ENCODE measurements at regions of chr7 and their contacts with region 1.

Region 1: GRCh38 chr7:41940760-41941343 is 238.0 kb upstream of the INHBA start:
- DNase-seq: no peak
- H3K4me3 ChIP-seq: no peak overlapping the region
- H3K27me3 ChIP-seq: no peaks in the 10 kb centered on the region
- CTCF ChIP-seq: peak; percentile 88

Region 2: GRCh38 chr7:41796331-41796730 is 144.5 kb before region 1 on chr7:
- CTCF ChIA-PET with region 1: no interaction called
- POLR2A ChIA-PET with region 1: no interaction called
- DNase-seq: no peak
- H3K4me3 ChIP-seq: no peak overlapping the region
- H3K27me3 ChIP-seq: no peaks in the 10 kb centered on the region
- CTCF ChIP-seq: no peak

Region 3: DNA sequence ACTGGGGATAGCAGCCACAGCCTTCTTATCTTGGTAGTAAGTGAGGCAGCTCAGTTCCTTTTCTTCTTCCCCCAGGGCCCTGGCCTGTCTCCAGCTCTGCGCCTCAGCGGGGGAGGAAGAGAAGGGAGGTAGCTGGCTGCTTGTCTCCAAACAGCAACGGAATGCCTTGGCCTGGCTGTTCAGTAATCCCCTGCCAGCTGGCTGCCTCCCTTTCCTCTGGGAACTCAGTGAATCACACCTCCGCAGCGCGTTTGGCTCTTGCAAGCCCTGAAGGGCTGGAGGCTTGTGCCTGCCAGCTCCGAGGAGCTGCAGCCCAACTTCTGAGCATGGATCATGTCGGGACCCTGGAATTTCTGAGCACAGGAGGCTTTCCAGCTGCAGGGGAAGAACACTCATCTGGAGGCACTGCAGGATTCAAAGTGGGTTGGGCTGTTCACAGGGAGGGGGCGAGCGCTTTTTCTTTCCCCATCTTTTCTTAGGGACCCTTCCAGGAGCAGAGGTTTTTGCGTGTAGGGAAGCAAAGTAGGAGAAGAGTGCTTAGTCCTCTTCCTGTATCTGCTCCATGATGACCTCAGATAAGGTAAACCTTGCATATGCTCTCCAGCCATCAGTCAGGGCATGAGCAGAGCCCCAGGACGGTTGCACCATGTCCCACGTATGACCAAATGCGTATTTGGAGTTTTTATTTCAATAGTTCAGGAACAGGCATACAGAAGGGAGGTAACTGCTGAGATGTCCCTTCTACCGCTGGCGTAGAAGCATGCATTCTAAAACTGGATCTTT is 15.2 kb after region 1 on chr7:
- CTCF ChIA-PET with region 1: interaction called, 72 read pairs
- POLR2A ChIA-PET with region 1: no interaction called
- DNase-seq: peak; percentile 98
- H3K4me3 ChIP-seq: no peak overlapping the region
- H3K27me3 ChIP-seq: no peaks in the 10 kb centered on the region
- CTCF ChIP-seq: no peak

Region 4: DNA sequence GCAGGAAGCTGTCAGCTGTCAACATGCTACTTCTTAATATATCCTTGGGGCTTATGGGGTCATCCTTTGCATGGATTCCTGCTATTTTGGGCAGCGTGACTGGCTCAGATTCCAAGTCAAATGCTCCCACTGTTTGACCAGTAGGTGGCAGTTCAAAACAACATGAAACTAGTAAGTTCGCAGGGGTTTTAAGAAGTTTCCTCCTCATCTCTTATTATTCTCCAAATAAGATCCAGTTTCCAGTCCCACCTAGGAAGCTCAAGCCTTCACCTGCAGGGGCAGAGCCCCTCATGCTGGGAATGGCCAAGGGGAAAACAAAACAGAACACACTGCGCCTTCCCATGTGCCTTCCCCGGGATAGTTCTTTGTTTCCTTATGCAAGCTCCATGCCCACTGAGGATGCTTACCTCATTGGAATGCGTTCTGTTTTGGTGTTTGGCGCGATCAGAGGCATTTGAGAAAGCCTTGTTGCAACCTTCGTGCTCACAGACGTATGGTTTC is 36.3 kb after region 1 on chr7:
- CTCF ChIA-PET with region 1: interaction called, 64 read pairs
- POLR2A ChIA-PET with region 1: no interaction called
- DNase-seq: no peak
- H3K4me3 ChIP-seq: no peak overlapping the region
- H3K27me3 ChIP-seq: no peaks in the 10 kb centered on the region
- CTCF ChIP-seq: peak; percentile 81

Region 5: GRCh38 chr7:42128703-42129102 is 187.9 kb after region 1 on chr7:
- CTCF ChIA-PET with region 1: no interaction called
- POLR2A ChIA-PET with region 1: no interaction called
- DNase-seq: no peak
- H3K4me3 ChIP-seq: no peak overlapping the region
- H3K27me3 ChIP-seq: no peaks in the 10 kb centered on the region
- CTCF ChIP-seq: peak; percentile 25; the same call in 1 of the 2 replicates

Region 6: DNA sequence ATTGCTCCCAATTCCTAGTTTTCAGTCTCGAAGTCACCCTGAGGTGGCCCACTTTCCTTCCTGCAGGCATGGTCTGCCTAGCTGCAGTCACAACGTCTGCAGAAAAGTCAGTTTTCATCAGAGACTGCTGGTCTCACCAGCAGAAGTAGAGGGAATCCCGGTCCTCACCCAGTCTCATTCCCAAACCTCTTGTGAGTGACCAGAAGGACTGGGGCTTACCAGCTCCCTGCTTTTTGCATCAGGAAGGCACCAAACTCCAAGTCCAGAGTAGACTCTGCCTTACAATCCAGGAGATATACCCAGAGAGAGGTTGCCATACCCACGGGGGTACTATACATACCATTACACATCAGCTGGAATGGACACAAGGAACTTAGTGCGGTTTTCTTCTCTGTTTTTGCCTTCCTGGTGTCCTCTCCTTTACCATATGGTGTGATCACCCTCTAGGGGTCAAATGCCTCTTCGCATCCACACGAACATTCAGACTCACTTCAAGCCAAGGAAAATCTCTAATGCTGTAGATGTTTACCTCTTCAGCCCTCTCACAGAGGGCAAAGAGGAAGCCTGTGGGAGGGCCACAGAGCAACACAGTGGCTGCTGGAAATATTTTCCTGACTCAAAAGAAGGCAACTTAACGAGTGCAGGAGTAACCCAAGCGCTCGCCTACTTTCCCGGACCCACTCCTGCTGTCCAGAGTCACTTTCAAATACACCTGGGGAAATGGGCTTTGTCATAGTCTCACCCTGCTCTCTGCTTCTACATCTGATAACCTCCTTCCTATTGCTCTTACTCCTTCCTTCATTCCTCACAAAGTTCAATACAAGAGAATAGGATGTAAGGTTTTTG is 750.2 kb after region 1 on chr7:
- CTCF ChIA-PET with region 1: interaction called, 22 read pairs
- POLR2A ChIA-PET with region 1: no interaction called
- DNase-seq: no peak
- H3K4me3 ChIP-seq: no peak overlapping the region
- H3K27me3 ChIP-seq: peaks cover 5% of the 10 kb centered on the region
- CTCF ChIP-seq: peak; percentile 61

Region 7: GRCh38 chr7:42843205-42843800 is 902.5 kb after region 1 on chr7:
- CTCF ChIA-PET with region 1: interaction called, 91 read pairs
- POLR2A ChIA-PET with region 1: no interaction called
- DNase-seq: no peak
- H3K4me3 ChIP-seq: no peak overlapping the region
- H3K27me3 ChIP-seq: peaks cover 5% of the 10 kb centered on the region
- CTCF ChIP-seq: peak; percentile 61

Region 8: DNA sequence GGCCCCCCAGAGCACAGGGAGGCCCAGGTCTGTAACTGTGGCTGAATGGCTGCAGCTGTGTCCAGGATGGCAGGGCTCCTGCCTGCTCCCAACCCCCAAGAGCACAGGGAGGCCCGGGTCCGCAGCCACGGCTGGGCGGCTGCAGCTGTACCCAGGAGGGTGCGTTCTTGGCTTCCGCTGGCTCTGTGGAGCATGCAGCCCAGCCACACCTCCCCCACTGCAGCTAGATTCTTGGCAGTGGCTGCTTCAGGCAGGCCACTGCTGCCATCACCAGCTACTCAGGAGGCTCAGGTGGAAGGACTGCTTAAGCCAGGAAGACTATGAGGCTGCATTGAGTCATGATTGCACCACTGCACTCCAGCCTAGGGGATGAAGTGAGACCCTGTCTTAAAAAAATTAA is 943.1 kb after region 1 on chr7:
- CTCF ChIA-PET with region 1: interaction called, 93 read pairs
- POLR2A ChIA-PET with region 1: no interaction called
- DNase-seq: no peak
- H3K4me3 ChIP-seq: no peak overlapping the region
- H3K27me3 ChIP-seq: 0 out of 2 replicates have a peak, but pooled peaks cover 3% of the 10 kb centered on the region
- CTCF ChIP-seq: no peak

Measured in BJ (cell line).